ENCODE measurements at regions of chr17 and their contacts with region 1.

Region 1: GRCh38 chr17:77444984-77445759 is 304.4 kb downstream of the SEC14L1 start:
- DNase-seq: peak; percentile 93
- ATAC-seq: peak; percentile 50
- H3K4me3 Mint-ChIP-seq: peak overlapping the region; percentile 77
- H3K27ac Mint-ChIP-seq: peak overlapping the region; percentile 94
- H3K4me1 Mint-ChIP-seq: peaks cover 91% of the 10 kb centered on the region
- H3K27me3 Mint-ChIP-seq: no peaks in the 10 kb centered on the region
- CTCF ChIP-seq: no peak

Region 2: DNA sequence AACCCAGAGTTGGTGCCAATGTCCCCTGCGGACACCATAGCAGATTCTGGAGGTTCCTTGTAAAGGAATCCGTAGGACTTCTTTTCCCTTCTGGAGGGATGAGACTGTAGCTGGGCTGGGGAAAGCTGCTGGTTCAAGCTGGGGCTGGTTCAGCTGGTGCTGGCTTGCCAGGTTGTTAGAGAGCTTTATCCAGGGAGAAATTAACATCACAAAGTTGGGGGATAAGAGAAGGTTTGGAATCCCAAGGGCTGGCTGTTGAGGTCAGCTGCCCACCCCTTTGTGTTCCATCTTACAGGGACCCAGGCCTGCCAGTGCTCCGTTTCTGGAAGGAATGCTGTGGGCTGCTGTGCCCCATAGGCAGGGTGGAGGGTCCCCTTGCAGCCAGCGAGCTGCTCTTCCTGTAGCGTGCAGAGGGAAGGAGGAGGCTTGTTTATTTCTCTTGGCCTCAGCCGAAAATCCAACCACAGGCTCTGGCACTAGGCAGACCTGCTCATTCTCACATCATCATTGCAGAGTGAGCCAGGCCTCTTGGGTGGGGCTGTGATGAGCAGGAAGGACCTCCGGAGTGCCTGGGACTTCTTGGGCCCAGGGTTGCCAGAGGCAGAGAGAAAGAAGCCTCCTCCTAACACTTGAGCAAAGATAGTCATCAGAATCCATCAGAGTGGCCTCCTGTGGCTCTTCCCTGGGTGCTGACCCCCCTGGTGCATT is 53.4 kb before region 1 on chr17:
- CTCF ChIA-PET with region 1: interaction called, 3 read pairs
- POLR2A ChIA-PET with region 1: interaction called, 11 read pairs
- intact Hi-C with region 1: no loop called
- DNase-seq: peak; percentile 84
- ATAC-seq: peak; percentile 62
- H3K4me3 Mint-ChIP-seq: peak overlapping the region; percentile 81
- H3K27ac Mint-ChIP-seq: peak overlapping the region; percentile 85
- H3K4me1 Mint-ChIP-seq: peaks cover 68% of the 10 kb centered on the region
- H3K27me3 Mint-ChIP-seq: no peaks in the 10 kb centered on the region
- CTCF ChIP-seq: no peak

Region 3: DNA sequence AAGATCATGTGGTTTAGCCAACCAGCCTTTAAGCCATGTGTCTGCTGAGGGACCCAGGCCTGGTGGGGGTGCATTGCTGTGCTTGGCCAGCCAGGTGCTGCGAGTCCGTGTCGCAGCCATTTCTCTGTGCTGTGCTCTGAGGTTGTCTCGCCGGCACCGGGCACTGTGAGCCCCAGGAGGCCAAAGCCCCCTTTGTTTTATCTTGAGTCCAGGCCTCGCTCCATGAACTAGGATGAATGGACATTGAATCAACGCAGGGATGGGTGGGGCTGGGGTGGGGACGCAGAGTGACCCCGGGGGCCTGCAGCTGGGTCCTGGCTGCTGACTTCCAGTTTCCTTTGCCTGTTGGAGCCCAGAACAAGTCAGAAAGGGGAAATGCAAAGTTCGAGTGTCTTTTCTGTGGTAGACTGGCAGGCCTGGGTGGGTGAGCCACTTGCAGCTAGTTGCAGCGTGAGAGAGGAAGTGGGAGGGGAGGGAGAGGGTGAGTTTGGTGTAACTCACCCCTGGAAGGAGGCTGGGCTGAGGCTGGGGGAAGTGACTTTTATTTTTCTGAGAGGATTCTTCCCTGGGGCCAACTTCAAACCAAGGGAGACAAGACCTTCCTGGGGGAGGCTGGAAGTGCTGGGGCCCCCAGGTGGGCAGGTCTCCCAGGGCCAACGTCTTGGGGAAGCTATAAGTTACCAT is 20.3 kb after region 1 on chr17:
- CTCF ChIA-PET with region 1: interaction called, 14 read pairs
- POLR2A ChIA-PET with region 1: interaction called, 410 read pairs
- intact Hi-C with region 1: no loop called
- DNase-seq: peak; percentile 91
- ATAC-seq: peak; percentile 81
- H3K4me3 Mint-ChIP-seq: peak overlapping the region; percentile 60
- H3K27ac Mint-ChIP-seq: peak overlapping the region; percentile 89
- H3K4me1 Mint-ChIP-seq: peaks cover 82% of the 10 kb centered on the region
- H3K27me3 Mint-ChIP-seq: no peaks in the 10 kb centered on the region
- CTCF ChIP-seq: no peak

Region 4: GRCh38 chr17:77476931-77477877 is 32.0 kb after region 1 on chr17:
- CTCF ChIA-PET with region 1: interaction called, 14 read pairs
- POLR2A ChIA-PET with region 1: interaction called, 87 read pairs
- intact Hi-C with region 1: no loop called
- DNase-seq: peak; percentile 62
- ATAC-seq: no peak
- H3K4me3 Mint-ChIP-seq: peak overlapping the region; percentile 28
- H3K27ac Mint-ChIP-seq: peak overlapping the region; percentile 53
- H3K4me1 Mint-ChIP-seq: peaks cover 81% of the 10 kb centered on the region
- H3K27me3 Mint-ChIP-seq: no peaks in the 10 kb centered on the region
- CTCF ChIP-seq: no peak